HEK293 (cell line): ENCODE measurements at regions of chr6 and their contacts with region 1.

Region 1: GRCh38 chr6:112269114-112269513 is 14.7 kb upstream of the LAMA4 start:
- H3K4me3 ChIP-seq: no peak overlapping the region
- H3K27ac ChIP-seq: no peak overlapping the region
- H3K4me1 ChIP-seq: no peaks in the 10 kb centered on the region
- CTCF ChIP-seq: peak; percentile 33; the same call in 1 of the 2 replicates

Region 2: GRCh38 chr6:112153926-112154607 is 115.0 kb before region 1 on chr6:
- CTCF ChIA-PET with region 1: no interaction called
- POLR2A ChIA-PET with region 1: no interaction called
- H3K4me3 ChIP-seq: no peak overlapping the region
- H3K27ac ChIP-seq: no peak overlapping the region
- H3K4me1 ChIP-seq: no peaks in the 10 kb centered on the region
- CTCF ChIP-seq: no peak

Region 3: DNA sequence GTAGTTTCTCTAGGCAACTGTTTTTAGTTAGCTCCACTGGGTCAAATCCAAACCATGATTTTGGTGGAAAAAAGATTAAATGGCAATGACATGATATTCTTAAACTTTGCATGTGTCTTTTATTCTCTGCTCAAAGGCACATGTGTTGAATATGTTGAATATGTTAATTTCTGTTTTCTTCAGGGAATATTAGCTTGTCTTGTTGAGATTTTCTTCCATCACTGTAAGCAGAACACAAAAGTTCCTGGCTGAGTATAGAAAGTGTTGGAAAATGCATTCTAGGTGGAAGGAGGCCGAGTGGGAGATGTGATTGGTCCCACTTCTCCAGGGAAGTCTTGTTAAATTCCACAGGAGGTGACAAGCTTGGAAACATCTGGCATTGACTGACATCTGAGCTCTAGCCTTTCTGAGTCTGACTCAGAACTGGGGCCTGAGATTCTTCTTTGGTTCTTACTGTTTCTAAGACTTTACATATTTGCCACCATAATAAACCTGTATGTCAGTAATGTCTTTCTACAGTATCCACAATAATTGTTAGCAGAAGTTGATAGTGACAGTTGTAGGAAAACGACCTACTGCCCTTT is 95.8 kb before region 1 on chr6:
- CTCF ChIA-PET with region 1: interaction called, 13 read pairs
- POLR2A ChIA-PET with region 1: no interaction called
- H3K4me3 ChIP-seq: no peak overlapping the region
- H3K27ac ChIP-seq: no peak overlapping the region
- H3K4me1 ChIP-seq: peaks cover 9% of the 10 kb centered on the region
- CTCF ChIP-seq: no peak

Region 4: GRCh38 chr6:112237595-112237994 is 31.5 kb before region 1 on chr6:
- CTCF ChIA-PET with region 1: interaction called, 10 read pairs
- POLR2A ChIA-PET with region 1: no interaction called
- H3K4me3 ChIP-seq: no peak overlapping the region
- H3K27ac ChIP-seq: no peak overlapping the region
- H3K4me1 ChIP-seq: peaks cover 30% of the 10 kb centered on the region
- CTCF ChIP-seq: no peak

Region 5: DNA sequence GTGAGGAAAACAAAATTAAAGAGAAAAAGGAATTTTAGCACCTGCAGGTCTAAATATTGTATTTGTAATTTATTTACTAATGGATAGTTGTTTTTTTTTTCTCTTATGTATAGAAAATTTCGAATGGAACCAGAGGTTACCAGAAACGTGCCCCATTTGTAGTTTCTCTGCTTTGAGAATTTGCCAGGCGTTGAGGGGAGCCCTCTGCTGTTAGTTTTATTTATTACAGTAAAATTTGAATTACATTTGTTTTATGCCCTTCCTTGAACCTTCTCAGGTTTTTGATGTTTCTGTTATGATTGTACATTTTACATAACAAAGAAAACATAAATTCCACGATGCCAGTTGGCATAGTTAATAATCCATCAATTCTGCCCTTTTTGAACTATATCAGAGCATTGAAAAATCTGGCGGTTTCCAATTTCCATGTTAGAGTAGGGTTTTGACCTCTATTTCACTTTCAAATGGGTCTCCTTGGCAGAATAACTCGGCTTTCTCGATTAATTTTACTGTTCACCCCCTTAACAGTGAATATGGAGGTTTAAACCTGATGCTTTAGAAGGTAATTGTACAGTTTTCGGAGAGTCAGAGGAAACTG is 42.9 kb after region 1 on chr6:
- CTCF ChIA-PET with region 1: interaction called, 12 read pairs
- POLR2A ChIA-PET with region 1: no interaction called
- H3K4me3 ChIP-seq: no peak overlapping the region
- H3K27ac ChIP-seq: no peak overlapping the region
- H3K4me1 ChIP-seq: no peaks in the 10 kb centered on the region
- CTCF ChIP-seq: 0 out of 2 replicates have a peak, but pooled peaks have one; percentile 10